HepG2 (cell line): ENCODE measurements at regions of chr10 and their contacts with region 1.

Region 1: GRCh38 chr10:15370856-15371701 is at the start of gene FAM171A1:
- DNase-seq: no peak
- ATAC-seq: peak; percentile 65
- H3K4me3 ChIP-seq: peak within 1 kb of the TSS; percentile 77 to 84 (median 82)
- H3K27ac ChIP-seq: peak within 1 kb of the TSS; percentile 65
- H3K4me1 ChIP-seq: peaks cover 34% of the 10 kb centered on the region
- H3K27me3 ChIP-seq: 0 out of 5 replicates have a peak, but pooled peaks cover 0 to 4% of the 10 kb centered on the region in 2 experiments
- CTCF ChIP-seq: peak; percentile 33
- EP300 ChIP-seq: no peak
- POLR2A ChIP-seq: no peak
- RAD21 ChIP-seq: peak; percentile 55; the same call in 1 of the 2 replicates
- total RNA-seq, gene FAM171A1: 17.8 and 21.5 TPM in 2 replicates

Region 2: GRCh38 chr10:15209827-15210509 is 161.1 kb before region 1 on chr10:
- CTCF ChIA-PET with region 1: interaction called, 16 read pairs
- POLR2A ChIA-PET with region 1: no interaction called
- in situ Hi-C with region 1: no loop called
- intact Hi-C with region 1: loop called (anchors 2 kb)
- DNase-seq: peak; percentile 69
- ATAC-seq: peak; percentile 95
- H3K4me3 ChIP-seq: no peak overlapping the region
- H3K27ac ChIP-seq: no peak overlapping the region
- H3K4me1 ChIP-seq: no peaks in the 10 kb centered on the region
- H3K27me3 ChIP-seq: no peaks in the 10 kb centered on the region
- CTCF ChIP-seq: peak; percentile 93
- EP300 ChIP-seq: no peak
- POLR2A ChIP-seq: no peak
- RAD21 ChIP-seq: peak; percentile 62; the same call in 1 of the 2 replicates

Region 3: GRCh38 chr10:15262036-15262713 is 108.9 kb before region 1 on chr10:
- CTCF ChIA-PET with region 1: interaction called, 13 read pairs
- POLR2A ChIA-PET with region 1: no interaction called
- in situ Hi-C with region 1: loop called (anchors 5 kb)
- intact Hi-C with region 1: loop called (anchors 1 kb)
- DNase-seq: peak; percentile 28
- ATAC-seq: peak; percentile 65
- H3K4me3 ChIP-seq: no peak overlapping the region
- H3K27ac ChIP-seq: no peak overlapping the region
- H3K4me1 ChIP-seq: peaks cover 8% of the 10 kb centered on the region
- H3K27me3 ChIP-seq: no peaks in the 10 kb centered on the region
- CTCF ChIP-seq: peak; percentile 46
- EP300 ChIP-seq: no peak
- POLR2A ChIP-seq: no peak
- RAD21 ChIP-seq: 0 out of 2 replicates have a peak, but pooled peaks have one; percentile 19

Region 4: DNA sequence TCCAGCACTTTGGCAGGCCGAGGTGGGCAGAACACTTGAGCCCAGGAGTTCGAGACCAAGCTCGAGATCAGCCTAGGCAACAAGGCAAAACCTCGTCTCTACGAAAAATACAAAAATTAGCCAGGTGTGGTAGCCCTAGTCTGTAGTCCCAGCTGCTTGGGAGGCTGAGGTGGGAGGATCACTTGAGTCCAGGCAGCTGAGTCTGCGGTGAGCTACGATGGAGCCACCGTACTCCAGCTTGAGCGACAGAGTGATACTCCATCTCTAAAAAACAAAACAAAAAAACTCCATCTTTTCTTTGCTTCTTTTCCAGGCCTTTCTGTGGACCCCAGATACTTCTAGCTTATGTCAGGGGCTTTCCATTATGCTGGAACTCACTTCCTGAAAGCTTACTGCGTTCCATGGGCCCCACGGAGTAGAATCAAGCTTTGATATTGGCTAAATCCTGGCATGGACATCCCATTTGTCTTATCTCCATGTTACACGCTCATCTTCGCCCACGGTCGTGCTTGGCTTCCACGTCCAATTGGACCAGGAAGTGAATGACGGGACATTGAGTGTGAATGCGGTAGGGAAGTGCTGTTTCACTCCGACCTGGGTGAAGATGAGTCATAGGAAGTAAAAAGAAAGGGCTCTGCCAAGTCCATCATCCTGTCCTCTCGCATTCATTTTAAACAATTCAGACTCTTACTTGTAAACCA is 45.7 kb before region 1 on chr10:
- CTCF ChIA-PET with region 1: no interaction called
- POLR2A ChIA-PET with region 1: no interaction called
- in situ Hi-C with region 1: loop called (anchors 5 kb)
- intact Hi-C with region 1: loop called (anchors 5 kb)
- DNase-seq: no peak
- ATAC-seq: no peak
- H3K4me3 ChIP-seq: no peak overlapping the region
- H3K27ac ChIP-seq: no peak overlapping the region
- H3K4me1 ChIP-seq: peaks cover 51% of the 10 kb centered on the region
- H3K27me3 ChIP-seq: no peaks in the 10 kb centered on the region
- CTCF ChIP-seq: no peak
- EP300 ChIP-seq: no peak
- POLR2A ChIP-seq: no peak
- RAD21 ChIP-seq: no peak

Region 5: DNA sequence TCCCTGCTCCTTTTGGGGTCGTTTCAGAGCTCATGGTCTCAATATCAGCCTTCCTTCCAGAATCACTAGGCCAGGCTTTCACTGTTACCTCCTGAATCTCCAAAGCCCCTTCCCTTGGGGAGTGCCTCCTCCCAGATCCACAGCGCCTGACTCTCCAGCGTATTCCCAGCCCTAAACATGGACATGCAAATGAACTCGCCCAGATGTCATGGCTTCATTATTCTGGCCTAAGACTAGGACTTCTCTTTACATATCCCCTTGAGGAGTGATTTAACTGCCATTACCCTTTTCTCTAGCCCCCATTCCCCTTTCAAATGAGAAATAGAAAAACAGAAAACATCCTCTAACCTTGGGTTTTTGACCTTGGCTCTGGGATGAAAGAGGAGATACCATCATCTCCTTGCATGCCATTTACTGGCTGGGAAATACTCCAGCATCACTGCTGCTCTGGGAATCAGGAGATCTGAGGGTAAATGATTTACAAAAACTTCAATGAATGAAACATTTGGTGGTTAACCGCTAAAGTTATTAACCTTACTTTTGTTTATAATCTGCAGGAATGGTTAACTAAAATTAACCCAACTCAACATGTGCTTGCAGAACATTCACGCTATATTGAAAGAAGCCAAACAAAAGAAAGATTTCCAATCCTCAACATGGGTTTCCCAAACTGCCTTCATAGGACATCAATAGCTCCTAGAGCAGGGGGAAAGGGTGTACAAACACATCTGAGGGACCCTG is 37.0 kb before region 1 on chr10:
- CTCF ChIA-PET with region 1: no interaction called
- POLR2A ChIA-PET with region 1: interaction called, 10 read pairs
- in situ Hi-C with region 1: loop called (anchors 5 kb)
- intact Hi-C with region 1: loop called (anchors 5 kb)
- DNase-seq: peak; percentile 96
- ATAC-seq: peak; percentile 87
- H3K4me3 ChIP-seq: peak overlapping the region in 2 of 3 experiments; percentile 15 to 49; a peak in 2 of 6 replicates
- H3K27ac ChIP-seq: peak overlapping the region; percentile 96
- H3K4me1 ChIP-seq: peaks cover 94% of the 10 kb centered on the region
- H3K27me3 ChIP-seq: no peaks in the 10 kb centered on the region
- CTCF ChIP-seq: no peak
- EP300 ChIP-seq: peak in 1 of 2 experiments; percentile 87; a peak in 2 of 4 replicates
- POLR2A ChIP-seq: peak; percentile 6 to 12; a peak in 2 of 4 replicates
- RAD21 ChIP-seq: no peak

Region 6: GRCh38 chr10:16367621-16368292 is 996.7 kb after region 1 on chr10:
- CTCF ChIA-PET with region 1: no interaction called
- POLR2A ChIA-PET with region 1: no interaction called
- in situ Hi-C with region 1: no loop called
- intact Hi-C with region 1: no loop called
- DNase-seq: no peak
- ATAC-seq: no peak
- H3K4me3 ChIP-seq: no peak overlapping the region
- H3K27ac ChIP-seq: no peak overlapping the region
- H3K4me1 ChIP-seq: peaks cover 6% of the 10 kb centered on the region
- H3K27me3 ChIP-seq: no peaks in the 10 kb centered on the region
- CTCF ChIP-seq: no peak
- EP300 ChIP-seq: no peak
- POLR2A ChIP-seq: no peak
- RAD21 ChIP-seq: no peak